A549 (cell line): ENCODE measurements at regions of chr17 and their contacts with region 1.

Region 1: DNA sequence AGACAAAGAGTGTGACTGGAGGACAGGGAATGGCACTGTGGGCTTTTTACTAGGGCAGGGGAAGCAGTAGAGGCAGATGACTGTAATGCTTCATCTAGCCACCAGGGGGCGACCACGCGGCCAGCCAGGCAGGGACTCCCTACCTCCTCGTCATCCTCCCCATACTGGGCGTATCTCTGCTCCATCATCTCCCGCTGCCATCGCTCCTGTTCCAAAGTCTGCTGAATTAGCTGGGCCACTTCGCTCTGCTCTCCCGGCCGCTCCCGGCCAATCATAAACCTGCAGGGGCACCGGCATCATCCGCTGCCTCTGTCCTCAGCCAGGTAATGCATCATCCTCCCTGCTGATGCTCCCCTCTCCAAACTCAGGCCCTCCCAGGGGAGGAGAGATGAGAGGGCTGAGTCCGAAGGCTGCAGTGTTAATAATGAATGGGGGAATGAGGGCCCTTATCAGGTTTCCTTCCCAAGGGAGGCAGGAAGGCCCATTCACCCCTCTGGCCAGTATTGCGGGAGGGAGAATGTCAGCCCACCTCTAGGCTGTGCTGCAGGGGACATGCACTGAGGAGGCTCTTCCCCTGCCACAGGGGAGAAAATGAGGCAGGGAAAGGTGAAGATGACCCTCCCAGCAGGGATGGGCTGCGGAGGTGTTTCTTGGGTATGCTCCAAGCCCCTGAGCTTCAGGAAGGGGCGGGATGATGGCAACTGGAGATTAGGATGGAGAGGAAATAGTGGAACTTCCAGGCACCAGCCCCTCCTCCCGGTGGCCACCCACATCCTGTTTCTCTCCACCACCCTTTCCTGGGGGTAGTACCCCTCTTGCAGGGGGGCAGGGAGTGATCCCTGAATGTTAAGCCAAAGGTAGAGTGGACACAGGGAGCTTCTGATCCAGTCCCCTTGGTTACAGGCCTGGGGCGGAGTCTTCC is 10.3 kb upstream of the SAMD14 start:
- DNase-seq: peak; percentile 89 to 91
- ATAC-seq: peak; percentile 66 to 89
- H3K4me3 ChIP-seq: no peak overlapping the region
- H3K27ac ChIP-seq: no peak overlapping the region
- H3K4me1 ChIP-seq: peaks cover 18% of the 10 kb centered on the region
- CTCF ChIP-seq: peak; percentile 90
- EP300 ChIP-seq: no peak
- POLR2A ChIP-seq: no peak
- RAD21 ChIP-seq: peak; percentile 62 to 69; a peak in 4 of 5 replicates

Region 2: GRCh38 chr17:50079334-50080095 is 60.7 kb before region 1 on chr17:
- CTCF ChIA-PET with region 1: no interaction called
- POLR2A ChIA-PET with region 1: no interaction called
- DNase-seq: peak; percentile 79 to 87
- ATAC-seq: peak; percentile 73 to 88
- H3K4me3 ChIP-seq: no peak overlapping the region
- H3K27ac ChIP-seq: peak overlapping the region in 1 of 2 experiments; percentile 71; a peak in 3 of 6 replicates
- H3K4me1 ChIP-seq: peaks cover 12% of the 10 kb centered on the region; the same call in 2 of the 3 replicates
- CTCF ChIP-seq: peak; percentile 97
- EP300 ChIP-seq: no peak
- POLR2A ChIP-seq: no peak
- RAD21 ChIP-seq: peak; percentile 76 to 77

Region 3: DNA sequence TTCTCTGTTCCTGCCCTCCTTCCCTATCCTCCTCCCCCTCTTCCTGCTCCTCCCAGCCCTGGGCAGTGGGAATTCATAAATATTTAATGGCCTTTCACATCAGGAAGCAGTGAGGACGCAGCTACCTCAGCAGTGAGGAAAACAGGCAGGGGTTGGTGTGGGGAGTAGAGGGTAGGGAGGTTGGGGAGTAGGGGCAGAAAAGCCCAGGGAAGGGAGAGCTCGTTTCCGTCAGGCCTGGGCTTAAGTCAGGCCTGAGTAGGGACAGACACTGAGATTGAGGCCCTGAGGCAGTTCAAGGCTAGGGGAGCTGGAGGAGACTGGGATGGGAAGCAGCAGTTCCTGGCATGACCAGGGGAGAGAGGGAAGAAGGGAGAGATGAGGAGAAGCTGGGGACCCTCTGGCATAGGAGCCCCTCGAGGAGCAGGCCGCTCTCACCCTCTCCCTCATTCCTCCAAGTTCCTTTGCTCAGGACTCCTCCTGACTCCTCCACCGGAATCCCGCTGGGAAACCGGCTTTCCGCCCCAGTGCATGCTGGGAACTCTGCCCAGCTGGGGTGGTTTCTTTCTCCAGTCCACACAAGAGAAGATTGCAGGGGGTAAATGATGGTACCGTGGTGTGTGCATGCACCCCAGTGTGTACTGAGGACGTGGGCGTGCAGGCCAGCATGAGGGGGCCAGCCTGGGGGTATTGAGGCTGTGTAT is 16.4 kb before region 1 on chr17:
- CTCF ChIA-PET with region 1: interaction called, 1,356 read pairs
- POLR2A ChIA-PET with region 1: interaction called, 3 read pairs
- DNase-seq: no peak
- ATAC-seq: peak in 1 of 2 experiments; percentile 27; a peak in 3 of 6 replicates
- H3K4me3 ChIP-seq: no peak overlapping the region
- H3K27ac ChIP-seq: peak overlapping the region in 1 of 2 experiments; percentile 17; a peak in 1 of 6 replicates
- H3K4me1 ChIP-seq: peaks cover 10% of the 10 kb centered on the region; the same call in 1 of the 3 replicates
- CTCF ChIP-seq: no peak
- EP300 ChIP-seq: no peak
- POLR2A ChIP-seq: no peak
- RAD21 ChIP-seq: no peak

Region 4: DNA sequence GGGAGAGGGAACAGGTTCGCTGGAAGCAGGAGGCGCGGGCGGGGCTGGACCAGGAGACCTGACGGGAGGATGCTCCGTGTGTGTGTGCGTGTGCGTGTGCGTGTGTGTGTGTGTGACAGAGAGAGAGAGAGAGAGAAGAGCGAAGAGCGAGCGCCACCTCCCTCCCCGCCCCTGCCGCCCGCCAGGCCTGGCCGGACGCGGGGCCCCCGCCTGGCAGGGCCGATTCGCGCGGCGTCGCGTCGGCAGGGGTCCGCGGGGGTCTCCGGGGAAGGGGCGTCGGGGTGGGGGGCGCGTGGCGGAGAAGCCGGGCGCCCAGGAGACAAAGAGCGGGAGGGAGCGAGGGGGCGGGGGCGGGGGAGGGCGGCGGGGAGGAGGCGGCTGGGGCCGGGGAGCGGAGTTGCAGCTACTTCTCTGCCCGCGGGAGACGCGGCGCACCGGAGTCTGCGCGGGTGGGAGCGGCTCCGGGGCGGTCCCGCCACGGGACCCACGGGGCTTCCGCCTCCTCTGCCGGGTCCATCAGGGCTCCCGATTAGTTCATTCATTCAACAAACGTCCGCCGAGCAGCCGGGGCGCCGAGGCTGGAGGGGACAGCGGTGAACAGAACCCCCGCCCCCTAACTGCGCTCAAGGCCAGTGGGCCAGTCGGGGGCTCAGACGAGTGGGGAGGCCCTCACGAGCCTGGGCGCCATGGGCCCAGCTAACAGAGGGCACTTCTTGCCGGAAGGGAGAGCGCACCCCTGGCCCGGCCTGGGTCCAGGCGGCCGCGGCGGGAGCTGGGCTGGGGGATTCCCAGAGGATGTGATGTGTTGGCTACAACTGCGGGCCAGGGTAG is 10.3 kb before region 1 on chr17 and contains the start of gene SAMD14:
- CTCF ChIA-PET with region 1: interaction called, 139 read pairs
- POLR2A ChIA-PET with region 1: interaction called, 3 read pairs
- DNase-seq: peak; percentile 66 to 74
- ATAC-seq: peak; percentile 44 to 46; a peak in 4 of 6 replicates
- H3K4me3 ChIP-seq: peak within 1 kb of the TSS; percentile 63
- H3K27ac ChIP-seq: peak within 1 kb of the TSS; percentile 67 to 89
- H3K4me1 ChIP-seq: peaks cover 47% of the 10 kb centered on the region
- CTCF ChIP-seq: no peak
- EP300 ChIP-seq: no peak
- POLR2A ChIP-seq: no peak
- RAD21 ChIP-seq: no peak
- polyA plus RNA-seq, gene SAMD14: 0.12 and 0.15 TPM in 2 replicates

Region 5: DNA sequence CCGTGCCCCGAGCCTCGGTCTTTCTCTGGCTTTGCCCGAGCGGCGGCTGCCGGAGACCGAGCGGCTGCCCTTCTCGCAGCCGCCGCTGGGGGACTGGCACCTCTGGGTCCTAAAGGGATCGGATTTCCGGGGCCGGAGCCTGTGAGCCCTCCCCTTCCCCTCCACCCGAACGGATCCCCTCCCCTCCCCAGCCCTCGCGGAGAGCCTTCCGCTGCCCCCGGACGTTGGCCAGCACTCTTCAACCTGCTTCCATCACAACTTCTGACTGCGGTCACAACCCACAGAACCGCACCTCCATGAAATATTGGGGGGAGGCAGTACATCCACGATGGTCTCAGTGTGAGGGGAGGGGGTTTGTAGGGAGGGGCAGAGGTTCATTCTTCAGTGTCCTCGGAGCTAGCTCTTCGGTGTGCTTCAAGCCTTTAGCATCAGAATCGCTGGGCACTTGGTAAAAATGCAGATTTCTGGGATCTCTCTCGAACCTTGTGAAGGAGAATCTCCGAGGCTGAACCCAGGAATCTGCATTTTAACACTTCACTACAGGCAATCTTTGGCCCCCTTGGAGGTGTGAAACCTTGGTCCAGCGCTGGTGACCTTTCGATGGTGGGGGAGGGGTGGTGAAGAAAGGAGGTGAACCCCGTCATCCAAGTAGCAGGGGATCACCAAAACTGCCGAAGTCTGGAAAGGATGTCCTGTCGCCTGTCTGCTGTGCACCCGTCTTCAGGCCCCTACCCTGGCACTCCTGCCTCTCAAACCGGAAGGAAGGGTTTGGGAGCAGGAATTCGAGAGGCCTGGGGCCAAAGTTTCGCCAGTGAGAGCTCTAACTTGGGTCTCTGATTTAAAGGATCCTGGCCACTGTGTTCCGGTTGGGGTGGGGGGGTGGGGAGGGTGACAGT is 11.1 kb after region 1 on chr17:
- CTCF ChIA-PET with region 1: interaction called, 139 read pairs
- POLR2A ChIA-PET with region 1: interaction called, 10 read pairs
- DNase-seq: peak; percentile 96 to 97
- ATAC-seq: peak; percentile 71 to 78
- H3K4me3 ChIP-seq: peak overlapping the region; percentile 86
- H3K27ac ChIP-seq: peak overlapping the region; percentile 96 to 98
- H3K4me1 ChIP-seq: peaks cover 49% of the 10 kb centered on the region
- CTCF ChIP-seq: peak; percentile 36; the same call in 1 of the 3 replicates
- EP300 ChIP-seq: no peak
- POLR2A ChIP-seq: peak; percentile 73
- RAD21 ChIP-seq: no peak; a peak in 1 of 5 replicates

Region 6: GRCh38 chr17:50252781-50253180 is 112.6 kb after region 1 on chr17:
- CTCF ChIA-PET with region 1: no interaction called
- POLR2A ChIA-PET with region 1: no interaction called
- DNase-seq: no peak
- ATAC-seq: no peak
- H3K4me3 ChIP-seq: no peak overlapping the region
- H3K27ac ChIP-seq: no peak overlapping the region
- H3K4me1 ChIP-seq: 0 out of 3 replicates have a peak, but pooled peaks cover 3% of the 10 kb centered on the region
- CTCF ChIP-seq: no peak
- EP300 ChIP-seq: no peak
- POLR2A ChIP-seq: no peak
- RAD21 ChIP-seq: no peak